ENCODE measurements at regions of chr7 and their contacts with region 1.

Region 1: GRCh38 chr7:55255496-55256435 is 109.4 kb upstream of the LANCL2 start:
- DNase-seq: peak; percentile 93
- H3K4me3 ChIP-seq: peak overlapping the region; percentile 56 to 67
- H3K27ac ChIP-seq: peak overlapping the region; percentile 50 to 58; a peak in 3 of 4 replicates
- H3K4me1 ChIP-seq: peaks cover 0 to 15% of the 10 kb centered on the region in 2 experiments; a peak in 1 of 4 replicates
- H3K27me3 ChIP-seq: no peaks in the 10 kb centered on the region
- CTCF ChIP-seq: peak; percentile 99
- EP300 ChIP-seq: no peak
- RAD21 ChIP-seq: peak; percentile 99

Region 2: DNA sequence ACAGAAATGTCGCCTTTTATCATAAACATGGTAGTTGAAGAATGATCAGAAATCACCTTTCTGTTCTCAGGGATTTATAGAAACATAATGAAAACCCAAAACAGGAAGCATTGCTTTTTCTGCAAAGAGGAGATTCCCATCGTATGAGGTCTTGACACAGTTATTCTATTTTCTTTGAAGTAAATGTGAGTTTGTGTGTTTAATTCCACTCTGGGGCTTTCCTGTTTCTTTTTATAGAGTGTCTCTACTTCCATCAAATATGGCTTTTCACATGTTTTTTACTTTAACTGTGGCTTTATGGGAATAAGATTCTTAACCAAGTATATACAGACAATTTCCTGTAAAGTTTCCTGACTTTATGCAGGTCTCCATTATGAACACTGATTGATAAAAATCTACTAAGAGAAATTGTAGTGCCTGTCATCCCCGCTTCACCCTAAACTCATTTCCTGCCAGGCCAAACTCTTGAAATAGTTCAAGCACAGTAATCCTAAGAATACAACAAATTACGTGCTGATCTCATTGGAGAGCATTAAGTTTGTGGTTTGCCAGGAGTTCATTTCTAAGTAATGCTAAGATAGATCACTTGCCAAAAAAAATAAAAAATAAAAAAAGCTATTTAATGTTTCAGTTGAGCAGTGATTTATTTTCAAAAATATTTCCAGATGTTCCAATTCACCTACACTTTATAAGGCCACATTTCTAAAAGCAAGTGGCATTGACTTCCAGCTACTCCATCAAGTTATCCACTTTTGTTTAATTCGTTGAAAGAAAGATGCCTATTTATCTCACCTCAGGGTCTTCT is 444.5 kb before region 1 on chr7:
- CTCF ChIA-PET with region 1: interaction called, 28 read pairs
- POLR2A ChIA-PET with region 1: no interaction called
- DNase-seq: no peak
- H3K4me3 ChIP-seq: no peak overlapping the region
- H3K27ac ChIP-seq: peak overlapping the region; percentile 71 to 85; a peak in 3 of 4 replicates
- H3K4me1 ChIP-seq: peaks cover 6 to 25% of the 10 kb centered on the region in 2 experiments
- H3K27me3 ChIP-seq: no peaks in the 10 kb centered on the region
- CTCF ChIP-seq: no peak
- EP300 ChIP-seq: peak; percentile 69 to 93
- RAD21 ChIP-seq: no peak

Region 3: GRCh38 chr7:54904130-54904529 is 351.6 kb before region 1 on chr7:
- CTCF ChIA-PET with region 1: interaction called, 34 read pairs
- POLR2A ChIA-PET with region 1: no interaction called
- DNase-seq: no peak
- H3K4me3 ChIP-seq: no peak overlapping the region
- H3K27ac ChIP-seq: peak overlapping the region; percentile 44 to 56; a peak in 2 of 4 replicates
- H3K4me1 ChIP-seq: peaks cover 0 to 4% of the 10 kb centered on the region in 2 experiments; a peak in 2 of 4 replicates
- H3K27me3 ChIP-seq: no peaks in the 10 kb centered on the region
- CTCF ChIP-seq: no peak
- EP300 ChIP-seq: no peak
- RAD21 ChIP-seq: no peak

Region 4: GRCh38 chr7:55026866-55027490 is 228.8 kb before region 1 on chr7:
- CTCF ChIA-PET with region 1: interaction called, 61 read pairs
- POLR2A ChIA-PET with region 1: no interaction called
- DNase-seq: no peak
- H3K4me3 ChIP-seq: no peak overlapping the region
- H3K27ac ChIP-seq: peak overlapping the region in 1 of 2 experiments; percentile 4; a peak in 2 of 4 replicates
- H3K4me1 ChIP-seq: peaks cover 4 to 39% of the 10 kb centered on the region in 2 experiments
- H3K27me3 ChIP-seq: no peaks in the 10 kb centered on the region
- CTCF ChIP-seq: no peak
- EP300 ChIP-seq: no peak
- RAD21 ChIP-seq: no peak

Region 5: DNA sequence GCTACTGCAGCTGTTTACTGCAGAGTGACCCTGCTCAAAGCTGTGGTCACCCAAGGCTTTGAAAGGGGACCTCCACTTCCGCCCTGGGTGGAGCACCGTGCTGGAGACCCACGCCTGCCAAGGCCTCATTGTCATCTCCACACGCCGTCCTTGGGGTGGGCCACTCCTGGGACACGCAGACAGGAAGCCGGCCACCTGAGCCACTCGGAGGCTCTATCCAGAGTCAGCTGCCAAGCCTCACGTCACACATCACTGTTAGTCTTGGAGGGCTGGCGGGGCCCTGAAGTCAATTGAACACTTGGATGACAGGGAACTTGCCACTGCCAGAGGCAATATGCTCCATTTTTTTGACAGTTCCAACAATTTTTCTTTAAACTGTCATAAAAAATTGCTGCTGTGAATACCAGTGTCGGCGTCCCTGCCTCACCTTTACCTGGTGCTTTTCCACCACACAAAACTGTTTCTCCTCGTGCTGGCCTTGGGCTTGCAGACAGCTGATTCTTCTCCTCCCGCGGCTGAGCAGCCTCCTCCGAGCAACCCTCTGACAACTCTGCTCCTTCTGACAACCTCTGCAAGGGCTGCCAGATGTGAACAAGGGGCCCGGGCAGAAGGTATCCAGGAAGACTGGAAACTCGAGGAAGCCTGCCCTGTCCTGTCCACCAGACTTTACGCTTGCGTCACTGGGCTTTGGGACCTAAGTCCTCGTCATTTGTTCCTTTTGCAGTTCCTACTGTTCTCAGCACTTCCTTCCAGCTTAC is 155.0 kb before region 1 on chr7:
- CTCF ChIA-PET with region 1: interaction called, 22 read pairs
- POLR2A ChIA-PET with region 1: no interaction called
- DNase-seq: no peak
- H3K4me3 ChIP-seq: no peak overlapping the region
- H3K27ac ChIP-seq: no peak overlapping the region
- H3K4me1 ChIP-seq: peaks cover 22 to 34% of the 10 kb centered on the region in 2 experiments
- H3K27me3 ChIP-seq: no peaks in the 10 kb centered on the region
- CTCF ChIP-seq: no peak
- EP300 ChIP-seq: no peak
- RAD21 ChIP-seq: no peak

Region 6: GRCh38 chr7:55185321-55185802 is 70.4 kb before region 1 on chr7:
- CTCF ChIA-PET with region 1: interaction called, 44 read pairs
- POLR2A ChIA-PET with region 1: no interaction called
- DNase-seq: no peak
- H3K4me3 ChIP-seq: no peak overlapping the region
- H3K27ac ChIP-seq: peak overlapping the region in 1 of 2 experiments; percentile 62; a peak in 2 of 4 replicates
- H3K4me1 ChIP-seq: peaks cover 14 to 38% of the 10 kb centered on the region in 2 experiments; a peak in 3 of 4 replicates
- H3K27me3 ChIP-seq: no peaks in the 10 kb centered on the region
- CTCF ChIP-seq: no peak
- EP300 ChIP-seq: no peak
- RAD21 ChIP-seq: no peak

Region 7: GRCh38 chr7:55280031-55280454 is 24.3 kb after region 1 on chr7:
- CTCF ChIA-PET with region 1: interaction called, 54 read pairs
- POLR2A ChIA-PET with region 1: no interaction called
- DNase-seq: peak; percentile 81
- H3K4me3 ChIP-seq: no peak overlapping the region
- H3K27ac ChIP-seq: no peak overlapping the region
- H3K4me1 ChIP-seq: no peaks in the 10 kb centered on the region
- H3K27me3 ChIP-seq: no peaks in the 10 kb centered on the region
- CTCF ChIP-seq: peak; percentile 95
- EP300 ChIP-seq: no peak
- RAD21 ChIP-seq: peak; percentile 98

Region 8: GRCh38 chr7:55641273-55641691 is 385.5 kb after region 1 on chr7:
- CTCF ChIA-PET with region 1: no interaction called
- POLR2A ChIA-PET with region 1: no interaction called
- DNase-seq: peak; percentile 66
- H3K4me3 ChIP-seq: no peak overlapping the region; a peak in 1 of 4 replicates
- H3K27ac ChIP-seq: no peak overlapping the region
- H3K4me1 ChIP-seq: no peaks in the 10 kb centered on the region
- H3K27me3 ChIP-seq: no peaks in the 10 kb centered on the region; the same call in 1 of the 2 replicates
- CTCF ChIP-seq: peak; percentile 96
- EP300 ChIP-seq: no peak
- RAD21 ChIP-seq: peak; percentile 100

Measured in SK-N-SH (cell line).